CD8-positive, alpha-beta memory T cell (primary cell): ENCODE measurements at regions of chr16 and their contacts with region 1.

Region 1: GRCh38 chr16:57422026-57422944 is 17.7 kb downstream of the CCL17 start:
- DNase-seq: no peak
- H3K4me3 ChIP-seq: no peak overlapping the region
- H3K4me3 Mint-ChIP-seq: no peak overlapping the region
- H3K27ac ChIP-seq: no peak overlapping the region
- H3K27ac Mint-ChIP-seq: no peak overlapping the region
- H3K4me1 ChIP-seq: peaks cover 13% of the 10 kb centered on the region
- H3K4me1 Mint-ChIP-seq: peaks cover 7 to 19% (median 10%) of the 10 kb centered on the region in 3 donors
- H3K27me3 ChIP-seq: no peaks in the 10 kb centered on the region
- H3K27me3 Mint-ChIP-seq: no peaks in the 10 kb centered on the region

Region 2: GRCh38 chr16:57300387-57301125 is 121.7 kb before region 1 on chr16:
- CTCF ChIA-PET with region 1: interaction called, 127 read pairs
- POLR2A ChIA-PET with region 1: interaction called, 4 read pairs
- DNase-seq: peak; percentile 96 to 100 (median 99)
- H3K4me3 ChIP-seq: peak overlapping the region; percentile 64
- H3K4me3 Mint-ChIP-seq: no peak overlapping the region
- H3K27ac ChIP-seq: peak overlapping the region; percentile 68
- H3K27ac Mint-ChIP-seq: peak overlapping the region in 1 of 8 donors; percentile 32
- H3K4me1 ChIP-seq: peaks cover 26% of the 10 kb centered on the region
- H3K4me1 Mint-ChIP-seq: peaks cover 15 to 21% (median 19%) of the 10 kb centered on the region in 3 donors
- H3K27me3 ChIP-seq: no peaks in the 10 kb centered on the region
- H3K27me3 Mint-ChIP-seq: peaks cover 2 to 4% of the 10 kb centered on the region in 2 donors

Region 3: DNA sequence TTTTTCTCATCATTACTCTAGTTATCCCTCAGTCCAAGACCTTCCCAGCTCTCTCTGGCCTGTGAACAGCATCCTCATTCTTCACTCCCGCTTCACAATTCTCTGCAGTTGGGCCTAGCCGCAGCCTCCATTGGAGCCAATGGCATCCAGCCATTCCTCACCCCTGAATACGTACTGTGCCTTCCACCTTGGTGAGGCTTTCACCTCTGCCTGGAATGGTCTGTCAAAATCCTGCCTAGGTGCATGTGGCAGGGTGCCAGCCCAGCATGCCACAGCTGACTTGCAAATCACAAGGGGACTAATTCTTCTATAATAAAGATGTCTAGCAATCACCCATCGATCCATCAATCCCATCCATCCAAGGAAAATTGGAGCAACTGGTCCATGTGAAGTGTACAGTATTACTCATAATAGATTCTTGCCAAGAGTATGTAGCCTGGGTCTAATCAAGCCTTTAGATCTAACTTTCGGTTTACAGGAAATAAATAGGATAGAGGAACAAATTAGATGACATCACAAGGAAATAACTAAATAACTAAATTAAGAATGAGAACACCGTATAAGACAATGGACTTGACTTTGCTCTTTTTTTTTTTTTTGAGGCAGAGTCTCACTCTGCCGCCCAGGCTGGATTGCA is 55.1 kb before region 1 on chr16:
- CTCF ChIA-PET with region 1: no interaction called
- POLR2A ChIA-PET with region 1: no interaction called
- DNase-seq: no peak
- H3K4me3 ChIP-seq: no peak overlapping the region
- H3K4me3 Mint-ChIP-seq: no peak overlapping the region
- H3K27ac ChIP-seq: no peak overlapping the region
- H3K27ac Mint-ChIP-seq: no peak overlapping the region
- H3K4me1 ChIP-seq: no peaks in the 10 kb centered on the region
- H3K4me1 Mint-ChIP-seq: no peaks in the 10 kb centered on the region
- H3K27me3 ChIP-seq: no peaks in the 10 kb centered on the region
- H3K27me3 Mint-ChIP-seq: peaks cover 9 to 32% of the 10 kb centered on the region in 2 donors

Region 4: GRCh38 chr16:57383276-57384247 is 38.7 kb before region 1 on chr16:
- CTCF ChIA-PET with region 1: no interaction called
- POLR2A ChIA-PET with region 1: no interaction called
- DNase-seq: peak in 1 of 5 donors; percentile 12
- H3K4me3 ChIP-seq: no peak overlapping the region
- H3K4me3 Mint-ChIP-seq: peak overlapping the region in 1 of 7 donors; percentile 46
- H3K27ac ChIP-seq: no peak overlapping the region
- H3K27ac Mint-ChIP-seq: peak overlapping the region in 2 of 8 donors; percentile 5 to 50
- H3K4me1 ChIP-seq: no peaks in the 10 kb centered on the region
- H3K4me1 Mint-ChIP-seq: peaks cover 2 to 6% (median 4%) of the 10 kb centered on the region in 3 donors
- H3K27me3 ChIP-seq: no peaks in the 10 kb centered on the region
- H3K27me3 Mint-ChIP-seq: no peaks in the 10 kb centered on the region